ENCODE measurements at regions of chr17 and their contacts with region 1.

Region 1: GRCh38 chr17:44095642-44096496 is 25.3 kb downstream of the G6PC3 start:
- DNase-seq: peak; percentile 84
- ATAC-seq: peak; percentile 69

Region 2: GRCh38 chr17:43803758-43804157 is 292.1 kb before region 1 on chr17:
- intact Hi-C with region 1: no loop called
- DNase-seq: no peak
- ATAC-seq: no peak

Region 3: DNA sequence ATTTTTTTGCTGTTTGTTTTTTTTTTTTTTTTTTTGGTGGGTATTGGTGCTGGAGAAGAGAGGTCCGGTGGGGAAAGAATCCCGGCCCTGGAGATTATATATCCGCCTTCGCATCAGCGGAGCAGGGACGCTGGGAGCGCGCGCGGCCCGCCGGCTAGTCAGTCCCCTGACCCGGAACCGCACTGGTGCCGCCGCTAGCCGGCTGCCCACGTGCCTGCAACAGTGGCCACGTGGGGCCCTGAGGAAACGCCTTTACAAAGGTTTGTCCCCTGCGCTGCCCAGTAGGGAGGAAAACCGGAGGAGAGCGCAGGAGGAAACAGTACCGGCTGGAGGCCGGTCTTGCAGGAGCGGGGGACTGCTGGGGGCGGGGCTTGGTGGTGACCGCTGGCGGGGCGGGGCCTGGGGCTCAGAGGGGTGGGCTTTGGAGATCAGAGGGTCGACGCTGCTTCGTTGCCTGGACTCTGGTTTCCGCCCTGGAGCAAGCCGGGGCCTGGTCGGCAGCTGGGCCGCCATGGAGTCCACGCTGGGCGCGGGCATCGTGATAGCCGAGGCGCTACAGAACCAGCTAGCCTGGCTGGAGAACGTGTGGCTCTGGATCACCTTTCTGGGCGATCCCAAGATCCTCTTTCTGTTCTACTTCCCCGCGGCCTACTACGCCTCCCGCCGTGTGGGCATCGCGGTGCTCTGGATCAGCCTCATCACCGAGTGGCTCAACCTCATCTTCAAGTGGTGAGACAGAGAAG is 25.2 kb before region 1 on chr17 and contains the start of gene G6PC3:
- intact Hi-C with region 1: loop called (anchors 2 kb)
- DNase-seq: peak; percentile 96
- ATAC-seq: peak; percentile 95
- total RNA-seq, gene G6PC3: 30.4 TPM

Region 4: GRCh38 chr17:44110823-44111633 is 15.2 kb after region 1 on chr17:
- intact Hi-C with region 1: loop called (anchors 1 kb)
- DNase-seq: peak; percentile 99
- ATAC-seq: peak; percentile 86